Natural killer cell (primary cell): ENCODE measurements at regions of chr5 and their contacts with region 1.

Region 1: GRCh38 chr5:177327539-177328522 is 16.1 kb upstream of the MXD3 start:
- DNase-seq: peak; percentile 57 to 58
- ATAC-seq: peak; percentile 78 to 85 (median 84)
- H3K4me3 ChIP-seq: peak overlapping the region; percentile 20
- H3K4me3 Mint-ChIP-seq: peak overlapping the region; percentile 85
- H3K27ac ChIP-seq: peak overlapping the region; percentile 89
- H3K27ac Mint-ChIP-seq: peak overlapping the region; percentile 94 to 99
- H3K4me1 ChIP-seq: peaks cover 61% of the 10 kb centered on the region
- H3K4me1 Mint-ChIP-seq: peaks cover 45 to 69% of the 10 kb centered on the region in 2 donors
- H3K27me3 ChIP-seq: no peaks in the 10 kb centered on the region
- H3K27me3 Mint-ChIP-seq: no peaks in the 10 kb centered on the region
- CTCF ChIP-seq: no peak

Region 2: DNA sequence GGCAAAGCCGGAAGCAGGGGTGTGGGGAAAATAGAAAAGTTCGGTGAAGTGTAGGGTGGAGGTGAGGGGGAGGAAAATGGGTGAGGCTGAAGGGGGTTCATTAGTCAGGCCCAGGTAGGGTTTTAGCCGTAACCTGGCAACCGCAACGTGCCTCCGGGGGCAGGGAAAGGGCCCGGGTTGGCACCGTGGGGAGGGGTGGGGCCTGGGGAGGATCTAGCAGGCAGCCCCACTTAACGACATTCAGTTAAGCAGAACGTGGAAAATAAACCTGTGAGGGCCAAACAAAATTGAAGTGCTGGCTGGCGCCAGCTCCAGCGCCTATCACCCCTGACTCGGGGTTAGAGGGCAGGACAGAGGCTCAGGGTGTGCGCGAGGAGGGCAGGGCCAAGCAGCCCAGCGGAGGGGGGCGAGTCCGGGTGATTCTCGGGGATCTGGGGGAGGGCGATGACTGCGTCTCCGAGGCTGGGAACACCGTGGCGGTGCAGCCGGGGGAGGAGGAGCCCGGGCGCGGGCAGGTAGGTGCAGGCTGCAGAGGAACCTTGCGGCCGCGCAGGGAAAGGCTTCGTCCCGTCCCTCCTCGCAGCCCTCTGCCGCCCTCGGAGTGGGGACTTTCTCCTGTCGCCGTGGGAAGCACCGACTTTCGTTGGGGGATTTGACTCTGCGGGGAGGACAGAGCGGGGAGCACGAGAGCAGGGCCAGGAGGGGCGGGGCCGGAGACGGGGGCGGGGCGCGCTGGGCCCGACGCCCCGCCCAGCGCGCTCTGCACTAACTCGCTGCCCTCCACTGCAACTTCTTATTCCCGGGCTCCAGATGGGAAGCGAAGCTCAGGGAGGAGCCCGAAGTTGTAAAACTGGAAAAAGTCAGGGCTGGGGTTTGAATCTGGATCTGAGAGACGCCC is 35.0 kb after region 1 on chr5:
- intact Hi-C with region 1: loop called (anchors 5 kb)
- DNase-seq: peak; percentile 47 to 90
- ATAC-seq: peak; percentile 77 to 89 (median 86)
- H3K4me3 ChIP-seq: peak overlapping the region; percentile 29
- H3K4me3 Mint-ChIP-seq: peak overlapping the region; percentile 78
- H3K27ac ChIP-seq: peak overlapping the region; percentile 40
- H3K27ac Mint-ChIP-seq: peak overlapping the region; percentile 29 to 85
- H3K4me1 ChIP-seq: peaks cover 65% of the 10 kb centered on the region
- H3K4me1 Mint-ChIP-seq: peaks cover 28 to 60% of the 10 kb centered on the region in 2 donors
- H3K27me3 ChIP-seq: no peaks in the 10 kb centered on the region
- H3K27me3 Mint-ChIP-seq: no peaks in the 10 kb centered on the region
- CTCF ChIP-seq: no peak

Region 3: DNA sequence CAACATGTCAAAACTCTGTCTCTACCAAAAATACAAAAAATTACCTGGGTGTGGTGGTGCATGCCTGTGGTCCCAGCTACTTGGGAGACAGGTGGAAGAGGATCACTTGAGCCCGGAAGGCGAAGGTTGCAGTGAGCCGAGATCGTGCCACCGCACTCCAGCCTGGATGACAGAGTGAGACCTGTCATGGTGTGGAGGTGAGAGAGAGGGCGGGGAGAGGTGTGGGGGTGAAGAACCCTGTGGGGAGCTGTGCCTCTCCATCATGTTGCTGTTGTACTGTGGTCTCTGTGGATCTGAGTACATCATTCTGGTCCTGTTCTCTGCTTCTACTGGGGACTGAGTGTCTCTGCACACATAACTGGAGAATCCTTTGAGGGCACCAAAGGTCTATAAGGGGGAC is 45.1 kb after region 1 on chr5:
- intact Hi-C with region 1: no loop called
- DNase-seq: peak in 1 of 2 donors; percentile 56
- ATAC-seq: peak in 2 of 3 donors; percentile 33 to 41
- H3K4me3 ChIP-seq: no peak overlapping the region
- H3K4me3 Mint-ChIP-seq: peak overlapping the region; percentile 33
- H3K27ac ChIP-seq: peak overlapping the region; percentile 20
- H3K27ac Mint-ChIP-seq: peak overlapping the region; percentile 50 to 55
- H3K4me1 ChIP-seq: peaks cover 47% of the 10 kb centered on the region
- H3K4me1 Mint-ChIP-seq: peaks cover 22 to 32% of the 10 kb centered on the region in 2 donors
- H3K27me3 ChIP-seq: no peaks in the 10 kb centered on the region
- H3K27me3 Mint-ChIP-seq: no peaks in the 10 kb centered on the region
- CTCF ChIP-seq: no peak